Activated CD8-positive, alpha-beta T cell treated with anti-CD3 and anti-CD28 coated beads for 36 hours (primary cell): ENCODE measurements at regions of chr2 and their contacts with region 1.

Region 1: GRCh38 chr2:64653349-64654062 is at the start of gene SERTAD2:
- DNase-seq: peak; percentile 87
- ATAC-seq: peak; percentile 80
- H3K4me3 Mint-ChIP-seq: peak within 1 kb of the TSS; percentile 91
- H3K27ac Mint-ChIP-seq: peak within 1 kb of the TSS; percentile 90
- H3K4me1 Mint-ChIP-seq: peaks cover 74% of the 10 kb centered on the region
- H3K27me3 Mint-ChIP-seq: no peaks in the 10 kb centered on the region
- CTCF ChIP-seq: no peak
- total RNA-seq, gene SERTAD2: 31.2 to 33.9 TPM

Region 2: GRCh38 chr2:64609227-64609941 is 44.1 kb before region 1 on chr2:
- CTCF ChIA-PET with region 1: interaction called, 22 read pairs
- POLR2A ChIA-PET with region 1: interaction called, 34 read pairs
- intact Hi-C with region 1: no loop called
- DNase-seq: peak; percentile 60
- ATAC-seq: peak; percentile 60
- H3K4me3 Mint-ChIP-seq: peak overlapping the region; percentile 60
- H3K27ac Mint-ChIP-seq: peak overlapping the region; percentile 59
- H3K4me1 Mint-ChIP-seq: peaks cover 22% of the 10 kb centered on the region
- H3K27me3 Mint-ChIP-seq: no peaks in the 10 kb centered on the region
- CTCF ChIP-seq: peak; percentile 26

Region 3: DNA sequence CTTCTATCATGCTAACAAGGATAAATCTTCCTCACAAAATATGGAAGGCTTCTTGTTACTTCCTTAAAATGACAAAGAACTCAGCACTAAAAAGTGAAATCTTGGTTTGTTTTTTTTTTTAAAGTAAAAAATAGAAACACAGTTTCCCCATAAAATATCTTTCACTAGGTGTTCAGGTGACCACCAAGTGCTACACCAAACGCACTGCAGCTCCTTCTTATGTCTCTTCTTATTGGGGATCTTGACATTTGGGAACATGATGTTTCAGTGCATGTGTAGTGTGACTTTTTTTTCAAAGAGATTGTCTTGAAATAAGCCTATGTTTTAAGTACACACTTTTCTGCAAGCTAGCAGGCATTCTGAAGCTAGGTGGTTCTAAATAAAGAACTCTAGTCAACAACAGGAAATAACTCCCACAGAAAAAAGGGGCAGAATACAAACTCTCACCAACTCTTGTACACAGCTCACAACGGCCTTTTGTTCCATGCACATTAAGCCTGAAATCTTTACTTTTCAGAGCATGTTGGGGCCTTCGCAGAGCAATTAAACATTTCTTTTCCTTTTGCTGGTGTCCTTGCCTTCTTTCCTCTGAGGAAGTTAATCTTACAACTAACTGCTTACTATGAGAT is 13.4 kb after region 1 on chr2:
- CTCF ChIA-PET with region 1: interaction called, 32 read pairs
- POLR2A ChIA-PET with region 1: interaction called, 56 read pairs
- intact Hi-C with region 1: no loop called
- DNase-seq: no peak
- ATAC-seq: peak; percentile 55
- H3K4me3 Mint-ChIP-seq: peak overlapping the region; percentile 28
- H3K27ac Mint-ChIP-seq: peak overlapping the region; percentile 78
- H3K4me1 Mint-ChIP-seq: peaks cover 53% of the 10 kb centered on the region
- H3K27me3 Mint-ChIP-seq: no peaks in the 10 kb centered on the region
- CTCF ChIP-seq: no peak

Region 4: DNA sequence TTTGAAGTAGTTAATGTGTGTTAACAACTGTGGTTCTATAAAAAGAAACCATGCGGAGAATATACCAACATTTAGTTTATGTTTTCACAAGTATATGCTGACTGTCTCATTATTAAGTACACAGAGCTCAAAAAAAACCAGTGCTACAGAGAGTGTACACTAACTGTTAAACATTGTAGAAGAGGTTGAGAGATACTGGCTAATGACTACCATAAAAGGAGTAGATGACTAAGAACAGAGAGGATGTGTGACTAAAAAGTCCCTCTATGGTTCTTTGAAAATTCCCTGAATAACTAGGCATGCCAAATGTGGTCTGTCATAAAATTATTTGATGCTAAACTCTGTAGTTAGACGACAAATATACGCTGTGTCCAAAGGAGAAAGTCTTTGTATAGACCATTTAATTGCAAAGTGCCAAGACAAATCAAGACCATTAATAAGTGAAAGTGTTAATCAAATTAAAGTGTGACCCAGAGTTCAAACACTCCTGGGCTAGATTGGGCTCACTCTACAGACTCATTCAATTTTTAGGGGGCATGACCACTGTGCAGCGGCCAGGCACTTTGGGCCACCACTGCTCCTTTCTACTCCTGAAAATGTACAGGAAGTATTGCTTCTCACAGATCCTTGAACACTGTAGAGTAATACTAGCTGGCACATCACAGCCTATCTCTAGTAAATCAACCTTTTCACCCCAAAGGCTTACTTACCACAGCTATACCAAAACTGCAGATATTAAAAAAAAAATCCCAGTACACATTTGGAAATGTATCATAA is 45.4 kb after region 1 on chr2:
- CTCF ChIA-PET with region 1: interaction called, 4 read pairs
- POLR2A ChIA-PET with region 1: interaction called, 13 read pairs
- intact Hi-C with region 1: loop called (anchors 5 kb)
- DNase-seq: no peak
- ATAC-seq: peak; percentile 90
- H3K4me3 Mint-ChIP-seq: peak overlapping the region; percentile 52
- H3K27ac Mint-ChIP-seq: peak overlapping the region; percentile 87
- H3K4me1 Mint-ChIP-seq: peaks cover 60% of the 10 kb centered on the region
- H3K27me3 Mint-ChIP-seq: no peaks in the 10 kb centered on the region
- CTCF ChIP-seq: no peak

Region 5: DNA sequence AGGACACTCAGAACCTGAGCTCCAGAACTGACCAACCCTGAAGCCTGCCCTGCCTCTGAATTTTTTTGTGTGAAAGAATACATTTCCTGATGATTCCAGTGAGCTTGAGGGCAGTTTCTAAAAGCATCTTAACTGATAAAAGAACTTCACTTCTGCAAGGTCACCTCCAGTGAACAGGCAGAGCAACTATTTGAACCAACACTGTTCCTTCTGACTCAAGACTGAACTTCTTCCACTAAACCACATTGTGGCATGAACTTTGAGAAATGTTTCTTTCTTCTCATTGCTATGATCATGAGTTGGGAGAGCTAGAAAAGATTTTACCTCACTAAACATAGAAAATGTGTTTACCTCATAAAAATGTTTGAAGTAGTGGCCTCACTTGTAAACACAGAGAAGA is 84.0 kb after region 1 on chr2:
- CTCF ChIA-PET with region 1: interaction called, 5 read pairs
- POLR2A ChIA-PET with region 1: interaction called, 20 read pairs
- intact Hi-C with region 1: loop called (anchors 5 kb)
- DNase-seq: peak; percentile 37
- ATAC-seq: peak; percentile 82
- H3K4me3 Mint-ChIP-seq: peak overlapping the region; percentile 47
- H3K27ac Mint-ChIP-seq: peak overlapping the region; percentile 88
- H3K4me1 Mint-ChIP-seq: peaks cover 40% of the 10 kb centered on the region
- H3K27me3 Mint-ChIP-seq: no peaks in the 10 kb centered on the region
- CTCF ChIP-seq: no peak

Region 6: GRCh38 chr2:64797881-64798575 is 144.5 kb after region 1 on chr2:
- CTCF ChIA-PET with region 1: no interaction called
- POLR2A ChIA-PET with region 1: no interaction called
- intact Hi-C with region 1: no loop called
- DNase-seq: no peak
- ATAC-seq: no peak
- H3K4me3 Mint-ChIP-seq: no peak overlapping the region
- H3K27ac Mint-ChIP-seq: no peak overlapping the region
- H3K4me1 Mint-ChIP-seq: no peaks in the 10 kb centered on the region
- H3K27me3 Mint-ChIP-seq: peaks cover 2% of the 10 kb centered on the region
- CTCF ChIP-seq: no peak

Region 7: GRCh38 chr2:64831134-64831976 is 177.8 kb after region 1 on chr2:
- CTCF ChIA-PET with region 1: interaction called, 12 read pairs
- POLR2A ChIA-PET with region 1: interaction called, 14 read pairs
- intact Hi-C with region 1: loop called (anchors 5 kb)
- DNase-seq: peak; percentile 93
- ATAC-seq: peak; percentile 93
- H3K4me3 Mint-ChIP-seq: peak overlapping the region; percentile 54
- H3K27ac Mint-ChIP-seq: peak overlapping the region; percentile 88
- H3K4me1 Mint-ChIP-seq: peaks cover 22% of the 10 kb centered on the region
- H3K27me3 Mint-ChIP-seq: no peaks in the 10 kb centered on the region
- CTCF ChIP-seq: peak; percentile 97